GM10248 (cell line): ENCODE measurements at regions of chr20 and their contacts with region 1.

Region 1: DNA sequence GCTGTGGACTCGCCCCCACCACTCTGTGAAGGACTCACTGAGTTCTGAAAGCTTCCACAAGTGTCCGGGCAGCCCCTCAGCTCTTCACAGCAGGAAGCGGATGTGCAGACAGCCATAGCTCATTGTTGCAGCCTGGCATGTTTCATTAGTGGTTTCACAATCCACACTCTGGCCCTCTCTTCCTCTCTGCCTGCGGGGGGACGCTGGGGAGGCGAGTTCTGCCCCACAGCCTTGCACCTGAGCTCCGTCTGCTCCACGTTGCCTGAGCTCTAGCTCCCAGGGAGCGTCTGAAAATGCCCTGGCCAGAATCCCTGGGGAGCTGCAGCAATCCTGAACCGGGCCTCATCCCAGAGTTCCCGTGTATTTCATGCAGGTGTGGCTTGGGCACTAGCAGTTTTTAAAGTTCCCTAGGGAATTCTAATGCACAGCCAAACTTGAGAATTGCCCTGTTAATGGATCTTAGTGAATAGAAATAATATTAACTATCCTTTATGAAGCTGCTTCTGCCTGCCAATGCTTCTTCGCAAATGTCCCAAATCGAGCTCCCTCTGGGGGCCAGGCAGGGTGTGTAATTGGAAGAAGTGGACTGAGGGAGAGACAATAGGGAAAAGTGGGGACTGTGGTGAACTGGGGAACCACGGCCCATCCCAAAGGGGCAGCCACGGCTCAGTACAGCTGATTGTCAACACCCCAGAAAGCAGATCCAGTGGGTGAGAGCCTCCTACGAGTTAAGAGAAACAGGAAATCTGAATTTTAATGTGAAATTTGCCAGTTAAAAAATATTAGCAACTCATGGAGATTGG is 51.5 kb downstream of the CTCFL start:
- DNase-seq: peak; percentile 73
- CTCF ChIP-seq: no peak

Region 2: DNA sequence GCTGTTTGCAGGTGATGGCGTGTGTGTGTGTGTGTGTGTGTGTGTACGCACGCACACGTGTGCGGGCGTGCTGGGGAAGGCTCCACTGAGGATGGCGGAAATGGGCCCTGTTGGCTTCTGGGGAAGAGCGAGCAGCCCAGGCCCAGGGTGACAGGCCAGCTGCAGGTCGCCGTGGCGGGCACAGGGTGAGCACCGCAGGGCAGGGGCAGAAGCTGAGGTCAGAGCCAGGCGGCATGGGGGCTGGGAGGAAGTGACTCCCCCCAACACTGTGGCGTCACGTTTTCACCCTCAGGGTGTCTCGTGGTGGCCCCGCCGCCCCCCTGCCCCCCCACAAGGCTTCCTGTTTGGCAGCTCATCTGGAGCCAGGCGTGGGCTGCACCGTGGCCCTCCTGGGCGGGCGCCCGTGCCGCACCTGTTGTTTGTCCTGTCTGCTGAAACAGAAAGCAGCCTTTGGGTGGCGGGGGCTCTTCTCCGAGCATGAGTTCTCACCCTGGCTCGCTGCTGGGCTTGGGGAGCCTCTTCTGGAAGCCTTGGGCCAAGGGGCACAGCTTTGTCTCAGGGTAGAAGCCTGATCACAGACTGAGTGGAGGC is 75.1 kb before region 1 on chr20:
- CTCF ChIA-PET with region 1: interaction called, 13 read pairs
- POLR2A ChIA-PET with region 1: interaction called, 5 read pairs
- DNase-seq: peak; percentile 85
- CTCF ChIP-seq: no peak

Region 3: GRCh38 chr20:57493091-57493615 is 19.7 kb after region 1 on chr20:
- CTCF ChIA-PET with region 1: interaction called, 12 read pairs
- POLR2A ChIA-PET with region 1: no interaction called
- DNase-seq: no peak
- CTCF ChIP-seq: no peak